Activated CD4-positive, alpha-beta T cell treated with anti-CD3 and anti-CD28 coated beads for 36 hours (primary cell): ENCODE measurements at regions of chr1 and their contacts with region 1.

Region 1: DNA sequence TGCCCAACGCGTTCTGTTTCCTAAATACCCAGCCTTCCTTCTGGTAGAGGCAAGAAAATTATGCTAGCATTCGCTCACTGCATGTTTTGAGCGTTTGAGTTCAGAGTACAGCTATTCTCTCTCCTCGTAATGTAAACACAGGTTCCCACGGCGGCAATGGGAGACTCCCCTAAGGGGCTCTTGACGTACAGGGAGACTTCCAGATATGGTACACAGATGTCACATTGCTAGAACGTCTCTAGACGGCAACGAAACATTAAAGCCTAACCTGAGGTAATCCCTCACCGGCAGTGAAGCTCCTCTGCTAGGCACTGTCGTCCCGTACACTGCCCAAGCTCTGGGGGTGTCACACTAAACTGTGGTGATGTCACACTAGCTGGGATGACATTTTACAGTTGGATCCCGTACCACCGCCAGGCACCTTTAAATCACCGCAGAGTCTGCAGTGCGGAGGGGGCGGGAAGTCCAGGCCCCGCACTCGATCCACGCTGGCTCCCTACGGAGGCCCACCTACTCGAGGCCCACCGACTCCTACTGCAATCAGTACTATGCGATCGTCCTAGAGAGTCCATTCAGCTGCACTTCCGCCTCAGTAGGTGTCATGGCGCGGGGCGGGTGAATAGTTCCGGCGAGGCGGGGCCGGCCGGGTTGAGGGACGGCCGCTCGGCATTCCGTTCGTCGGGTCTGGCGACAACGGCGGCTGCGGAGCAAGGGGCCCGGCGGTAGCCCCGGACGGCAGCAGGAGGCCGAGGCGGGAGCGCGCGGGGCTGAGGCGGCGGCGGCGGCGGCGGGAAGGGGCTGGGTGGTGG is at the start of gene HIPK1:
- DNase-seq: peak; percentile 96
- ATAC-seq: peak; percentile 66
- H3K4me3 Mint-ChIP-seq: peak within 1 kb of the TSS; percentile 84
- H3K27ac Mint-ChIP-seq: peak within 1 kb of the TSS; percentile 99
- H3K4me1 Mint-ChIP-seq: peaks cover 41% of the 10 kb centered on the region
- H3K27me3 Mint-ChIP-seq: no peaks in the 10 kb centered on the region
- total RNA-seq, gene HIPK1: 42.2 to 50.3 TPM

Region 2: GRCh38 chr1:113389953-113390834 is 539.0 kb before region 1 on chr1 and contains the start of gene MAGI3:
- CTCF ChIA-PET with region 1: no interaction called
- POLR2A ChIA-PET with region 1: no interaction called
- intact Hi-C with region 1: loop called in 1 of 2 experiments (anchors 1 kb)
- DNase-seq: peak; percentile 97
- ATAC-seq: peak; percentile 97
- H3K4me3 Mint-ChIP-seq: peak within 1 kb of the TSS; percentile 86
- H3K27ac Mint-ChIP-seq: peak within 1 kb of the TSS; percentile 79
- H3K4me1 Mint-ChIP-seq: peaks cover 23% of the 10 kb centered on the region
- H3K27me3 Mint-ChIP-seq: peaks cover 5% of the 10 kb centered on the region
- total RNA-seq, gene MAGI3: 6.4 to 6.7 TPM

Region 3: GRCh38 chr1:113811888-113812660 is 117.1 kb before region 1 on chr1 and contains the start of gene RSBN1:
- CTCF ChIA-PET with region 1: interaction called, 5 read pairs
- POLR2A ChIA-PET with region 1: interaction called, 28 read pairs
- intact Hi-C with region 1: loop called (anchors 1 to 2 kb)
- DNase-seq: peak; percentile 99
- ATAC-seq: peak; percentile 97
- H3K4me3 Mint-ChIP-seq: peak within 1 kb of the TSS; percentile 97
- H3K27ac Mint-ChIP-seq: peak within 1 kb of the TSS; percentile 97
- H3K4me1 Mint-ChIP-seq: peaks cover 33% of the 10 kb centered on the region
- H3K27me3 Mint-ChIP-seq: no peaks in the 10 kb centered on the region
- total RNA-seq, gene RSBN1: 22.1 to 24.3 TPM

Region 4: GRCh38 chr1:113871597-113872113 is 57.5 kb before region 1 on chr1 and contains the start of gene PTPN22:
- CTCF ChIA-PET with region 1: interaction called, 8 read pairs
- POLR2A ChIA-PET with region 1: interaction called, 11 read pairs
- intact Hi-C with region 1: loop called (anchors 1 kb)
- DNase-seq: peak; percentile 89
- ATAC-seq: peak; percentile 84
- H3K4me3 Mint-ChIP-seq: peak within 1 kb of the TSS; percentile 84
- H3K27ac Mint-ChIP-seq: peak within 1 kb of the TSS; percentile 99
- H3K4me1 Mint-ChIP-seq: peaks cover 72% of the 10 kb centered on the region
- H3K27me3 Mint-ChIP-seq: no peaks in the 10 kb centered on the region
- total RNA-seq, gene PTPN22: 42.4 to 52.6 TPM

Region 5: GRCh38 chr1:113949007-113949406 is 19.9 kb after region 1 on chr1:
- CTCF ChIA-PET with region 1: interaction called, 155 read pairs
- POLR2A ChIA-PET with region 1: interaction called, 13 read pairs
- intact Hi-C with region 1: loop called (anchors 2 kb)
- DNase-seq: no peak
- ATAC-seq: no peak
- H3K4me3 Mint-ChIP-seq: no peak overlapping the region
- H3K27ac Mint-ChIP-seq: peak overlapping the region; percentile 79
- H3K4me1 Mint-ChIP-seq: peaks cover 76% of the 10 kb centered on the region
- H3K27me3 Mint-ChIP-seq: no peaks in the 10 kb centered on the region

Region 6: GRCh38 chr1:114208734-114209133 is 279.6 kb after region 1 on chr1:
- CTCF ChIA-PET with region 1: no interaction called
- POLR2A ChIA-PET with region 1: no interaction called
- intact Hi-C with region 1: no loop called
- DNase-seq: no peak
- ATAC-seq: no peak
- H3K4me3 Mint-ChIP-seq: no peak overlapping the region
- H3K27ac Mint-ChIP-seq: no peak overlapping the region
- H3K4me1 Mint-ChIP-seq: no peaks in the 10 kb centered on the region
- H3K27me3 Mint-ChIP-seq: peaks cover 22% of the 10 kb centered on the region

Region 7: GRCh38 chr1:114379987-114380386 is 450.8 kb after region 1 on chr1:
- CTCF ChIA-PET with region 1: no interaction called
- POLR2A ChIA-PET with region 1: no interaction called
- intact Hi-C with region 1: no loop called
- DNase-seq: no peak
- ATAC-seq: no peak
- H3K4me3 Mint-ChIP-seq: no peak overlapping the region
- H3K27ac Mint-ChIP-seq: no peak overlapping the region
- H3K4me1 Mint-ChIP-seq: no peaks in the 10 kb centered on the region
- H3K27me3 Mint-ChIP-seq: no peaks in the 10 kb centered on the region

Region 8: DNA sequence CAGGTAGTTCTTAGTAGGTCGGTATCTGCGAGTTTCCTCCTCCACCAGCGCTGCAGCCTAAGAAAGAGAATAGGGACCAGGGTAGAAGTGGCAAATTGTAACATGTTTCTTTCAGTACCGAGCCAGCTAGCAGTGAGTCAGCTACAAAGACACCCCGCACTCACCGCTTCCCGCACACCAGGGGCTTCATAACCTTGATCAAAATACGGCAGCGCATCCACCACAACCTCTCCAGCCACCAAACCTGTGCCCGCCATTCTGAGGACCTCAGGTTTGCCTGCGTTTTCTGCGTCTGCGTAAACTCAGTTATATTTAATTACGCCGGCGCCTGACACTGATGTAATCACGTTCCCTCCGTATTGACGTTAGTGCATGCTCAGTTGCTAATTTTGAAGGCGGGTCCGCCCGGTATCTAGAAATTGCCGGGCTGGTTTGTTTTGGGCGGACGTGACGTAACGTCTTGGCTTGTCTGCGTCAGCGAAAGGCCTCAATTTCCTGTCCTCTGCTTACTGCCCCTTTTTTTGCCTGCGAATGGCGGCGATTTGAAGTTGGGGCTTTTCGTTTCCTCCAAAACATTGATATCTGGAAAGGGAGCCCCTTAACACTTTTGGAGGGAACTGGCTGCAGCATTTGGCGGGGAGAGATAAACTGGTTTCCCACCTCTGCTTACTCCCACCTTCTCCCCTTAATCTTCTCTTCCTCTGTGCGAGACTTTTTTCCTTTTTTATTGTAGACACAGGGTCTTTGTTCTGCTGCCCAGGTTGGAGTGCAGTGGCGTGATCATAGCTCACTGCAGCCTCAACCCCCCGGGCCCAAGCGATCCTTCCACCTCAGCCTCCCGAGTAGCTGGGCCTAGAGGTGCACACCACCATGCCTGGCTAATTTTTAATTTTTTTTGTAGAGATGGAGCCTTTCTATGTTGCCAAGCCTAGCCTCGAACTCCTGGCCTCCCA is 652.5 kb after region 1 on chr1 and contains the start of gene BCAS2:
- CTCF ChIA-PET with region 1: no interaction called
- POLR2A ChIA-PET with region 1: no interaction called
- intact Hi-C with region 1: loop called in 1 of 2 experiments (anchors 1 kb)
- DNase-seq: peak; percentile 97
- ATAC-seq: peak; percentile 99
- H3K4me3 Mint-ChIP-seq: peak within 1 kb of the TSS; percentile 97
- H3K27ac Mint-ChIP-seq: peak within 1 kb of the TSS; percentile 98
- H3K4me1 Mint-ChIP-seq: peaks cover 29% of the 10 kb centered on the region
- H3K27me3 Mint-ChIP-seq: peaks cover 1% of the 10 kb centered on the region
- total RNA-seq, gene BCAS2: 54.1 to 54.8 TPM